WTC11 (cell line): ENCODE measurements at regions of chr11 and their contacts with region 1.

Region 1: GRCh38 chr11:12331239-12331874 is 46.0 kb upstream of the PARVA start:
- DNase-seq: peak; percentile 85
- ATAC-seq: peak; percentile 91
- H3K4me3 Mint-ChIP-seq: peak overlapping the region; percentile 22
- H3K27ac Mint-ChIP-seq: no peak overlapping the region
- H3K4me1 Mint-ChIP-seq: peaks cover 12% of the 10 kb centered on the region
- H3K27me3 Mint-ChIP-seq: no peaks in the 10 kb centered on the region; the same call in 1 of the 2 replicates
- CTCF ChIP-seq: peak; percentile 48

Region 2: GRCh38 chr11:12258451-12258850 is 72.9 kb before region 1 on chr11:
- CTCF ChIA-PET with region 1: no interaction called
- POLR2A ChIA-PET with region 1: no interaction called
- DNase-seq: no peak
- ATAC-seq: no peak
- H3K4me3 Mint-ChIP-seq: no peak overlapping the region
- H3K27ac Mint-ChIP-seq: no peak overlapping the region
- H3K4me1 Mint-ChIP-seq: no peaks in the 10 kb centered on the region
- H3K27me3 Mint-ChIP-seq: no peaks in the 10 kb centered on the region; the same call in 1 of the 2 replicates
- CTCF ChIP-seq: no peak

Region 3: GRCh38 chr11:12318791-12319438 is 12.4 kb before region 1 on chr11:
- CTCF ChIA-PET with region 1: interaction called, 12 read pairs
- POLR2A ChIA-PET with region 1: no interaction called
- DNase-seq: no peak
- ATAC-seq: no peak
- H3K4me3 Mint-ChIP-seq: no peak overlapping the region
- H3K27ac Mint-ChIP-seq: no peak overlapping the region
- H3K4me1 Mint-ChIP-seq: peaks cover 27% of the 10 kb centered on the region
- H3K27me3 Mint-ChIP-seq: no peaks in the 10 kb centered on the region
- CTCF ChIP-seq: no peak

Region 4: GRCh38 chr11:12377824-12378593 is 46.7 kb after region 1 on chr11:
- CTCF ChIA-PET with region 1: interaction called, 36 read pairs
- POLR2A ChIA-PET with region 1: interaction called, 3 read pairs
- DNase-seq: peak; percentile 82
- ATAC-seq: peak; percentile 82
- H3K4me3 Mint-ChIP-seq: peak overlapping the region; percentile 94
- H3K27ac Mint-ChIP-seq: peak overlapping the region; percentile 100
- H3K4me1 Mint-ChIP-seq: peaks cover 23% of the 10 kb centered on the region
- H3K27me3 Mint-ChIP-seq: peaks cover 29% of the 10 kb centered on the region
- CTCF ChIP-seq: no peak

Region 5: DNA sequence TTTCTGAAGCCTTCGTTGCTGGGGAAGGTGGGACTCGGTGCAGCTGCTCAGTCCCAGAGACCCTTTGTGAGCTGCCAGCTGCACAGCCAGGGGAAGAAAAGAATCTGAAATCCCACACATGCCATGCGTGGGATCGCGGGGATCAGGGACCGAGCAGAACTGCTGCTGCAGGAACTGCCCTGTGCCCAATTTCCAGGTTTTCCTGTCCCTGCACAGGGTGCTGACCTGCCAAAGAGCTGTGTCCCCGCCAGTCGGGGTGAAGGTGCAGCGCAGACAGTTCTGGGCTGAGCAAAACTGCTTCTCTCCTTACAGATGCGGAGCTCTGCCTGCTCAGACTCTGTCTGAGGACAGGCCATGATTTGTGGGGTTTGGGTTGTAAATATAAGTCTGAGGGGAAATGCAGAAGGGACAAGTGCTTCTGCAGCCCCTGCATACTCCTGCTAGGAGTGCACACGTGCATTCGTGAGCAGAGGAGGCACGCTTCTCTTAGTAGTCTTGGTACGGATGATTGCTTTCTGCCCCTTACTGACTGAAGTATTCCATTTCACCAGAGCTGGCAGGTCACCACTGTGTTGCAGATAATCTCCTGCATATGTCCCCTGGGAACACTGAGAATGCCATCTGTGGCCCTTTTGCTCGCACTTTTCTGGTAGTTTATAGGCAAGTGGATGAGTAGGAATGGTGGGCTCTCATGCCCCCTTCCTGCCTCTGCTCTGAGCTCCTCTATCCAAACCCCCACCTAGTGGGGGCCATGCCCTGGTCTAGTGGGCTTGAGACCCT is 187.4 kb after region 1 on chr11:
- CTCF ChIA-PET with region 1: interaction called, 11 read pairs
- POLR2A ChIA-PET with region 1: no interaction called
- DNase-seq: no peak
- ATAC-seq: no peak
- H3K4me3 Mint-ChIP-seq: no peak overlapping the region
- H3K27ac Mint-ChIP-seq: no peak overlapping the region
- H3K4me1 Mint-ChIP-seq: no peaks in the 10 kb centered on the region
- H3K27me3 Mint-ChIP-seq: no peaks in the 10 kb centered on the region
- CTCF ChIP-seq: no peak

Region 6: GRCh38 chr11:12669930-12670329 is 338.6 kb after region 1 on chr11:
- CTCF ChIA-PET with region 1: interaction called, 16 read pairs
- POLR2A ChIA-PET with region 1: no interaction called
- DNase-seq: no peak
- ATAC-seq: no peak
- H3K4me3 Mint-ChIP-seq: no peak overlapping the region
- H3K27ac Mint-ChIP-seq: no peak overlapping the region
- H3K4me1 Mint-ChIP-seq: peaks cover 5% of the 10 kb centered on the region; the same call in 1 of the 2 replicates
- H3K27me3 Mint-ChIP-seq: peaks cover 13% of the 10 kb centered on the region
- CTCF ChIP-seq: no peak

Region 7: GRCh38 chr11:12888525-12889158 is 557.3 kb after region 1 on chr11:
- CTCF ChIA-PET with region 1: interaction called, 42 read pairs
- POLR2A ChIA-PET with region 1: no interaction called
- DNase-seq: peak; percentile 85
- ATAC-seq: peak; percentile 82
- H3K4me3 Mint-ChIP-seq: no peak overlapping the region
- H3K27ac Mint-ChIP-seq: peak overlapping the region; percentile 47; the same call in 1 of the 2 replicates
- H3K4me1 Mint-ChIP-seq: peaks cover 20% of the 10 kb centered on the region
- H3K27me3 Mint-ChIP-seq: no peaks in the 10 kb centered on the region
- CTCF ChIP-seq: peak; percentile 57

Region 8: DNA sequence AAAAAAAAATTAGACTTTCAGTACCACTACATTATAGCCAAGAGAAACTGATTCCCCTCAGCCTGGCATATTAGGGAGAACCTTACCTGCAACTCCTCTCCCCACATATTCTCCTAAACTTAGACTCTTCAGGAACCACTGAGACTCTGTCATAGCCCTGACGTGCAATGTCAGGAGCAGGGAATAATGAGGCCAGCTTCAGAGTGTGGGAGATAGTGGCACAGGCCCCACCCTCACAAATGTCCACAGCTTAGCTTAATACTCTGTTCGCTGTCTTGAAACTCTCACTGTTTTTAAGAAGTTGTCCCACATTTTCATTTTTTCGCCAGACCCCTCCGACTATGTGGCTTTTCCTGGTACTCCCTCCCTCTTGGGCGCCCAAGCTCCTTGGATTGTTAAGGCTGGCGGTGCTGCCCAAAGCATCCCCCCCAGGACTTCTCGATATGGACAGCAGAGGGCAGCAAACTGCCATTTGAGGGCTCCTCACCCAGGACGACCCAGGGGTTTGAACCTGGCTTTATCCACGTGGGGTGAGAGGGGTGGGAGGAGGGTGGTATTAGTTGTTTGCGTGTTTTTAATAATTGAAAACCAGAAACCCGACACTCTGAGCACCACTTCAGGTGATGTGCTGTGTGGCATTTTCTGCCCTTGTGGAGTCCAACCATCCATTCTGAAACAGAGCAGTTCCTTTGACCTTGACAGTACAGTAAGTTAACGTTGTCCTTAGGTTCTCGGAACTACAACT is 632.6 kb after region 1 on chr11:
- CTCF ChIA-PET with region 1: interaction called, 37 read pairs
- POLR2A ChIA-PET with region 1: no interaction called
- DNase-seq: peak; percentile 88
- ATAC-seq: peak; percentile 98
- H3K4me3 Mint-ChIP-seq: no peak overlapping the region
- H3K27ac Mint-ChIP-seq: no peak overlapping the region
- H3K4me1 Mint-ChIP-seq: peaks cover 11% of the 10 kb centered on the region; the same call in 1 of the 2 replicates
- H3K27me3 Mint-ChIP-seq: peaks cover 8% of the 10 kb centered on the region
- CTCF ChIP-seq: peak; percentile 78